HepG2 (cell line): ENCODE measurements at regions of chr5 and their contacts with region 1.

Region 1: GRCh38 chr5:91383027-91383955 is at the start of gene ARRDC3:
- DNase-seq: peak; percentile 94
- ATAC-seq: peak; percentile 86
- H3K4me3 ChIP-seq: peak within 1 kb of the TSS; percentile 77 to 90 (median 79)
- H3K27ac ChIP-seq: peak within 1 kb of the TSS; percentile 94
- H3K4me1 ChIP-seq: peaks cover 5% of the 10 kb centered on the region; the same call in 1 of the 2 replicates
- H3K27me3 ChIP-seq: no peaks in the 10 kb centered on the region; a peak in 2 of 5 replicates
- CTCF ChIP-seq: no peak; the same call in none of the 2 replicates
- EP300 ChIP-seq: no peak; a peak in 2 of 4 replicates
- POLR2A ChIP-seq: peak; percentile 95 to 100
- RAD21 ChIP-seq: 0 out of 2 replicates have a peak, but pooled peaks have one; percentile 14
- total RNA-seq, gene ARRDC3: 12.2 and 24.4 TPM in 2 replicates

Region 2: DNA sequence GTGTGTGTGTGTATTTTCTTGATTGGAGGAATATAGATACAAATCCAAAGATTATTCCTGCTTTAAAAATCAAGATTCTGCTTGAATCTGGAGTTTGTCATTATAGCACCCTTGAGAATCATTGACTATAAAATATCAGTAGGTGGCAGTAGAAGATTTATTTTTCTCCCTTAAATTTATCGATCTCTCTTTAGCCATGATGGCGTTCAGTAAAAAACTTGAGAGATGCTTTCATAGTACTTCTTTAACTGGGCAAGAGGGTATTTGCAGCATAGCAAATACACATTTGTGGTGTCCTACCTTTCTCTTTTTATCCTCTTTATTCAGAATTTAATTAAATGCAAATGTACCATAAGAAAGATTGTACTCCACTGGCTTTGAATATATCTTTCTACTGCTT is 517.0 kb before region 1 on chr5:
- CTCF ChIA-PET with region 1: interaction called, 64 read pairs
- POLR2A ChIA-PET with region 1: interaction called, 9 read pairs
- in situ Hi-C with region 1: loop called (anchors 5 kb)
- intact Hi-C with region 1: loop called (anchors 1 kb)
- DNase-seq: peak; percentile 40
- ATAC-seq: peak; percentile 74
- H3K4me3 ChIP-seq: peak overlapping the region in 1 of 3 experiments; percentile 4; a peak in 1 of 6 replicates
- H3K27ac ChIP-seq: no peak overlapping the region
- H3K4me1 ChIP-seq: peaks cover 23% of the 10 kb centered on the region
- H3K27me3 ChIP-seq: no peaks in the 10 kb centered on the region
- CTCF ChIP-seq: peak; percentile 72
- EP300 ChIP-seq: peak in 1 of 2 experiments; percentile 28; a peak in 1 of 4 replicates
- POLR2A ChIP-seq: no peak
- RAD21 ChIP-seq: peak; percentile 80

Region 3: GRCh38 chr5:90949469-90950358 is 433.6 kb before region 1 on chr5:
- CTCF ChIA-PET with region 1: no interaction called
- POLR2A ChIA-PET with region 1: no interaction called
- in situ Hi-C with region 1: no loop called
- intact Hi-C with region 1: loop called (anchors 5 kb)
- DNase-seq: peak; percentile 97
- ATAC-seq: peak; percentile 100
- H3K4me3 ChIP-seq: peak overlapping the region in 1 of 3 experiments; percentile 14; a peak in 2 of 6 replicates
- H3K27ac ChIP-seq: peak overlapping the region; percentile 69
- H3K4me1 ChIP-seq: peaks cover 42% of the 10 kb centered on the region
- H3K27me3 ChIP-seq: no peaks in the 10 kb centered on the region
- CTCF ChIP-seq: no peak
- EP300 ChIP-seq: peak; percentile 28 to 88; a peak in 3 of 4 replicates
- POLR2A ChIP-seq: peak in 1 of 2 experiments; percentile 36; a peak in 1 of 4 replicates
- RAD21 ChIP-seq: no peak

Region 4: GRCh38 chr5:91219803-91220371 is 163.4 kb before region 1 on chr5:
- CTCF ChIA-PET with region 1: interaction called, 82 read pairs
- POLR2A ChIA-PET with region 1: interaction called, 3 read pairs
- in situ Hi-C with region 1: loop called (anchors 5 kb)
- intact Hi-C with region 1: no loop called
- DNase-seq: no peak
- ATAC-seq: peak; percentile 53
- H3K4me3 ChIP-seq: no peak overlapping the region
- H3K27ac ChIP-seq: no peak overlapping the region
- H3K4me1 ChIP-seq: no peaks in the 10 kb centered on the region; the same call in 1 of the 2 replicates
- H3K27me3 ChIP-seq: no peaks in the 10 kb centered on the region
- CTCF ChIP-seq: peak; percentile 33; the same call in 1 of the 2 replicates
- EP300 ChIP-seq: no peak
- POLR2A ChIP-seq: no peak
- RAD21 ChIP-seq: no peak

Region 5: DNA sequence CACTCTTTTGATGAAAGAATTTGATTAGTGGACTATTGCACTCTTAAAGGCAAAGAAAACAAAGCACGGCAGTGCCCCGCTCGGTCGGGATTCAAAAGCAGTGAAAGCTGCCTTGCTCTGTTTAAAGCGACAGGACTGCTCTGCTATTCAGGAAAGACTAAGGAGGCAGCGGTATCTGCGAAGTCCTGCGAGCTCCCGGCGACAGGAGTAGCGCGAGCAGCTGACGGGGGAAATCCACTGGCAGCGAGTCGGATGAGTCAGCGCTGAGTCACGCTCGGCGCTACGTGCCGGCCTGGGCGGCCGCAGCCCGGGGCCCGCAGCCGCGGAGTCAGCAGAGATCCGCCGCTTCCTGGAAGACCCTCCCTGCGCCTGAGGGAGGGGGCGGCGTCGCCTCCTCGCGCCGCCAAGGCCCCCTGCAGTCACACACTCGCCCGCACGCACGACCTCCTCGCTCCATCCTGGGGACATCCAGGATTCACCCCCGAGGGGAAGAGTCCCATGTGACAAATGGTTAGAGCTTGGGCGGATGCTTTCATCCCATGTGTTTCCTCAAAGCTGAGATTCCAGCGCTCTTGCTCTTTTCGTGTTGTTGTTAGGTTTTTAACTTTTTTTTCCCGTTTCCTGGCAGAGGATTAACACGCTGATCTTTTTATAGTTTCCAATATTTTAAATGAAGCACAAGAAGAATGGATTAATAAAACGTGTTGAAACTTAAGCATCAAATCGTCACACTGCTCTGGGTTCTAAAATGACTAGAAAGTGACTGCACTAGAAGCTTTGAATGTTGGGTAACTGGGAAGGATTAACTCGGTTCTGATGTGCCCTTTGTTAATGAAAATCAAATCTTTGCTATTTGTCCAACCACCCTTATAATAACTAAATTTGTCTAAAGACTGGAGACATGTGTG is 102.7 kb before region 1 on chr5:
- CTCF ChIA-PET with region 1: no interaction called
- POLR2A ChIA-PET with region 1: interaction called, 7 read pairs
- in situ Hi-C with region 1: no loop called
- intact Hi-C with region 1: loop called (anchors 1 kb)
- DNase-seq: peak; percentile 74
- ATAC-seq: peak; percentile 99
- H3K4me3 ChIP-seq: peak overlapping the region; percentile 43 to 71 (median 57)
- H3K27ac ChIP-seq: peak overlapping the region; percentile 27
- H3K4me1 ChIP-seq: peaks cover 32% of the 10 kb centered on the region
- H3K27me3 ChIP-seq: no peaks in the 10 kb centered on the region
- CTCF ChIP-seq: peak; percentile 19; the same call in 1 of the 2 replicates
- EP300 ChIP-seq: peak in 1 of 2 experiments; percentile 67; a peak in 1 of 4 replicates
- POLR2A ChIP-seq: peak in 1 of 2 experiments; percentile 48; a peak in 1 of 4 replicates
- RAD21 ChIP-seq: 0 out of 2 replicates have a peak, but pooled peaks have one; percentile 21

Region 6: DNA sequence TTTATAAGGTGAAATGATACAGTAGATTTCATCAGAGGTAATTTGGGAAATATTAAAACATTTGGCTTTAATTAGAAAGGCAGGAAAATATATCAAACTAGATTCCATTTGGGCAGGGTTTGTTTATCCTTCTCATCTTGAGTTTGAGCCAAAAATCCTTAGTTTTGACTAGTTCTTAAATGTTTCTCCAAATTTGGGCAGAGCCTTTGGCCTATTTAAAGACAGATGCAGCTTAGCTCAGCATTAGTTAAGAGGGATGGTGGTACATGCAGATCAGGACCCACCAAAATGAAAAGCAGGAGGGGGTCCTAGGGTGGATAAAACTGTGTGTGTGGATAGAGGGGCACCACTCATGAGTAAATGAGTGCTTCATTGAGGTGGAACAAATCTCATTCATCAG is 20.1 kb after region 1 on chr5:
- CTCF ChIA-PET with region 1: no interaction called
- POLR2A ChIA-PET with region 1: no interaction called
- in situ Hi-C with region 1: no loop called
- intact Hi-C with region 1: no loop called
- DNase-seq: no peak
- ATAC-seq: no peak
- H3K4me3 ChIP-seq: no peak overlapping the region
- H3K27ac ChIP-seq: no peak overlapping the region
- H3K4me1 ChIP-seq: no peaks in the 10 kb centered on the region
- H3K27me3 ChIP-seq: no peaks in the 10 kb centered on the region
- CTCF ChIP-seq: no peak
- EP300 ChIP-seq: no peak
- POLR2A ChIP-seq: no peak
- RAD21 ChIP-seq: no peak

Region 7: GRCh38 chr5:91419571-91420537 is 36.6 kb after region 1 on chr5:
- CTCF ChIA-PET with region 1: interaction called, 4 read pairs
- POLR2A ChIA-PET with region 1: no interaction called
- in situ Hi-C with region 1: no loop called
- intact Hi-C with region 1: loop called (anchors 1 kb)
- DNase-seq: peak; percentile 32
- ATAC-seq: 0 out of 3 replicates have a peak, but pooled peaks have one; percentile 30
- H3K4me3 ChIP-seq: no peak overlapping the region
- H3K27ac ChIP-seq: no peak overlapping the region
- H3K4me1 ChIP-seq: no peaks in the 10 kb centered on the region
- H3K27me3 ChIP-seq: no peaks in the 10 kb centered on the region
- CTCF ChIP-seq: peak; percentile 61
- EP300 ChIP-seq: no peak
- POLR2A ChIP-seq: no peak
- RAD21 ChIP-seq: peak; percentile 37; the same call in 1 of the 2 replicates